Activated CD8-positive, alpha-beta T cell treated with anti-CD3 and anti-CD28 coated beads, Interleukin-2, amount 10 ng/mL, durations not matched to agents 7 days and 5 days (primary cell): ENCODE measurements at regions of chr1 and their contacts with region 1.

Region 1: DNA sequence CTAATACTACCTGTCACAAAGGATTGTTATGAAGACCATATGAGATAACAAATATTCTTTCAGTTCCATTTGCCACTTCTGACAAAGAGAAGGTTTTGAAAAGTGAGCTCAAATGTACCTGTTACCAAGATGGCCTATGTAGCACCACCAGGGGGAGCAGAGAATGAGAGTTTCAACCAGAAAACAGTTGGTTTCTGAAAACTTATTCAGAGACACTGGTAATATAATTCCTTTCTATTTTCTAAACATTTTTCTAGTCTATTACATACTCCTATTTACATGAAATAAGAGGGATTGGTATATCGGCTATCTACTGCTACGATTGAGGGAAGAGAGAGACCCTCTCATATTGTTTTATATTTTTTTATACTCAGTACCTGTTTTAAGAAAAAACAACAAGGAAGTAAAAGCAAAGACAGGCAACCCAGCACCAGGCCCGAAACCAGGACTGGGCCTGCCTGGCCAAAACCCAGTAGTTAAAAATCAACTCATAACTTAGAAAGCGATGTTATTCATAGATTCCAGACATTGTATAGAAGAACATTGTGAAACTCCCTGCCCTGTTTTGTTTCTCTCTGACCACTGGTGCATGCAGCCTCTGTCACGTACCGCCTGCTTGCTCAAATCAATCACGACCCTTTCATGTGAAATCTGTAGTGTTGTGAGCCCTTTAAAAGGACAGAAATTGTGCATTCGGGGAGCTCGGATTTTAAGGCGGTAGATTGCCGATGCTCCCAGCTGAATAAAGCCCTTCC is 48.3 kb downstream of the IL23R start:
- DNase-seq: peak; percentile 78
- ATAC-seq: peak; percentile 27
- H3K4me3 Mint-ChIP-seq: no peak overlapping the region
- H3K27ac Mint-ChIP-seq: no peak overlapping the region
- H3K4me1 Mint-ChIP-seq: peaks cover 44% of the 10 kb centered on the region
- H3K27me3 Mint-ChIP-seq: no peaks in the 10 kb centered on the region

Region 2: GRCh38 chr1:66996018-66996682 is 218.4 kb before region 1 on chr1:
- CTCF ChIA-PET with region 1: interaction called, 88 read pairs
- POLR2A ChIA-PET with region 1: no interaction called
- DNase-seq: peak; percentile 78
- ATAC-seq: peak; percentile 72
- H3K4me3 Mint-ChIP-seq: no peak overlapping the region
- H3K27ac Mint-ChIP-seq: no peak overlapping the region
- H3K4me1 Mint-ChIP-seq: peaks cover 20% of the 10 kb centered on the region
- H3K27me3 Mint-ChIP-seq: no peaks in the 10 kb centered on the region

Region 3: GRCh38 chr1:67142931-67143330 is 71.7 kb before region 1 on chr1:
- CTCF ChIA-PET with region 1: interaction called, 313 read pairs
- POLR2A ChIA-PET with region 1: interaction called, 4 read pairs
- DNase-seq: no peak
- ATAC-seq: peak; percentile 77
- H3K4me3 Mint-ChIP-seq: peak overlapping the region; percentile 9
- H3K27ac Mint-ChIP-seq: peak overlapping the region; percentile 71
- H3K4me1 Mint-ChIP-seq: peaks cover 39% of the 10 kb centered on the region
- H3K27me3 Mint-ChIP-seq: no peaks in the 10 kb centered on the region

Region 4: GRCh38 chr1:67194209-67194863 is 20.3 kb before region 1 on chr1:
- CTCF ChIA-PET with region 1: interaction called, 57 read pairs
- POLR2A ChIA-PET with region 1: no interaction called
- DNase-seq: no peak
- ATAC-seq: peak; percentile 62
- H3K4me3 Mint-ChIP-seq: peak overlapping the region; percentile 2
- H3K27ac Mint-ChIP-seq: peak overlapping the region; percentile 44
- H3K4me1 Mint-ChIP-seq: peaks cover 14% of the 10 kb centered on the region
- H3K27me3 Mint-ChIP-seq: no peaks in the 10 kb centered on the region

Region 5: GRCh38 chr1:67239738-67240137 is 25.1 kb after region 1 on chr1:
- CTCF ChIA-PET with region 1: interaction called, 52 read pairs
- POLR2A ChIA-PET with region 1: no interaction called
- DNase-seq: no peak
- ATAC-seq: no peak
- H3K4me3 Mint-ChIP-seq: no peak overlapping the region
- H3K27ac Mint-ChIP-seq: no peak overlapping the region
- H3K4me1 Mint-ChIP-seq: peaks cover 17% of the 10 kb centered on the region
- H3K27me3 Mint-ChIP-seq: peaks cover 3% of the 10 kb centered on the region

Region 6: DNA sequence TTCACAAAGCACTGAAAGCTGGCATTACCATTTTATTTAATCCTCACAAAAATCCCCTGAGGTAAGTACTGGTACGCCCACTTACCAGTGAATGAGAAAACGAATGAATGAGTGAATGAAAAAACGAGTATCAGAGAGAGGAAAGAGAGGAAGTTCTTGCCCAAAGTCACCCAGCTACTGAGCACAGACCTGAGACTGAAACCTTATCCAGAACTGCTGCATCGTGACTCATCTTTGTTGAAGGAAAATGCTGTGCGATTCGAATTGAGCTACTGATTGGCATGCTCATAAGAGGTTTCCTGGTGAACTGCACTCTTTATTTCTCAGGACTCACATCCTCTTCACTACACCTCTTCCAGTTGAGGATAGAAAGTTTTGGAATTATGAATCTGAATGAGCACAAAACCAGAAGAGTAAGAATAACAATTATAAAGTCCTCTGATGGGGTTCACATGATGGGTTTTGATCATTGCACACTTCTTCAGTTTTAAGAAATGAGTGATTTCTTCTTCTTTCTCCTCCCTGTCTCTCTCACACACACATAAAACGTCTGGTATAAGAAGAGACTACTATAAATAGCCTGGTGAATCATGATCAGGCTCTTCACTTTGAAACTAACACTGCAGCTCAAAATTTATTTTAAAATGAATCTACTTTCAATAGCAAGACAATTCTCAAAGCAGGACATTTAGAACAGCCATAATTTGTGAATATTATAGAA is 125.2 kb after region 1 on chr1:
- CTCF ChIA-PET with region 1: interaction called, 26 read pairs
- POLR2A ChIA-PET with region 1: no interaction called
- DNase-seq: peak; percentile 50
- ATAC-seq: peak; percentile 43
- H3K4me3 Mint-ChIP-seq: peak overlapping the region; percentile 1
- H3K27ac Mint-ChIP-seq: peak overlapping the region; percentile 69
- H3K4me1 Mint-ChIP-seq: peaks cover 82% of the 10 kb centered on the region
- H3K27me3 Mint-ChIP-seq: no peaks in the 10 kb centered on the region

Region 7: GRCh38 chr1:67441183-67441582 is 226.6 kb after region 1 on chr1:
- CTCF ChIA-PET with region 1: interaction called, 16 read pairs
- POLR2A ChIA-PET with region 1: no interaction called
- DNase-seq: no peak
- ATAC-seq: no peak
- H3K4me3 Mint-ChIP-seq: no peak overlapping the region
- H3K27ac Mint-ChIP-seq: no peak overlapping the region
- H3K4me1 Mint-ChIP-seq: peaks cover 5% of the 10 kb centered on the region
- H3K27me3 Mint-ChIP-seq: no peaks in the 10 kb centered on the region

Region 8: DNA sequence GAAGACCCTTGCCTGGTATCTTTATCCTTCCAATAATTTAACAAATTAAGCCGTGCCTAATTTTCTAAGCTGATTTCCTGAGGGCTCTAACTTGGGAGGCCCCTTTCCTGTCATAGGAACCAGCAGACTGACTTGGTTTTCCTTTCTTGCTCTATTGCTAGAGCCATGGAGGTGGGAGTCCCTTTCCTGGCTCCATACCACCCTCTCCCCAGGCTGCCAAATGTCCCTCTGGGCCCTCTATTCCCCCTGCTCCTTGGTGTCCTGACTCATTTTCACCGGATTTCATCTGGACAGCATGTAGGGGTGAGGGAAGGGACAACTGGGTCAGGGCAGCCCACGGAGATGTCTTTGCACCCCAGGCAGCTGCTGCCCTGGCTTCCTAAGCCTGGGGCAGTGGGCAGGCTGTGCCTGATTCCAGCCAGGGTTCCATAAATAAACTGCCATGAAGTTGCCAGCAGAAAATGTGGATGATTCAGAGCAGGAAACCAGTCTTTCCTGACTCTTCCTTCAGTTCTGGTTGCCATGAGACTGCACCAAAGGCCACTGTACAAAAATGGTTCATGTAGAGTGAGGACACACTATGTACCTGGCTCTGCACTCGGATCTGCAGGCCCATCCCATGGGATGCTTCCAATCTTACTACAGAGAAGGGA is 253.6 kb after region 1 on chr1:
- CTCF ChIA-PET with region 1: no interaction called
- POLR2A ChIA-PET with region 1: no interaction called
- DNase-seq: no peak
- ATAC-seq: no peak
- H3K4me3 Mint-ChIP-seq: no peak overlapping the region
- H3K27ac Mint-ChIP-seq: no peak overlapping the region
- H3K4me1 Mint-ChIP-seq: no peaks in the 10 kb centered on the region
- H3K27me3 Mint-ChIP-seq: peaks cover 8% of the 10 kb centered on the region

Region 9: DNA sequence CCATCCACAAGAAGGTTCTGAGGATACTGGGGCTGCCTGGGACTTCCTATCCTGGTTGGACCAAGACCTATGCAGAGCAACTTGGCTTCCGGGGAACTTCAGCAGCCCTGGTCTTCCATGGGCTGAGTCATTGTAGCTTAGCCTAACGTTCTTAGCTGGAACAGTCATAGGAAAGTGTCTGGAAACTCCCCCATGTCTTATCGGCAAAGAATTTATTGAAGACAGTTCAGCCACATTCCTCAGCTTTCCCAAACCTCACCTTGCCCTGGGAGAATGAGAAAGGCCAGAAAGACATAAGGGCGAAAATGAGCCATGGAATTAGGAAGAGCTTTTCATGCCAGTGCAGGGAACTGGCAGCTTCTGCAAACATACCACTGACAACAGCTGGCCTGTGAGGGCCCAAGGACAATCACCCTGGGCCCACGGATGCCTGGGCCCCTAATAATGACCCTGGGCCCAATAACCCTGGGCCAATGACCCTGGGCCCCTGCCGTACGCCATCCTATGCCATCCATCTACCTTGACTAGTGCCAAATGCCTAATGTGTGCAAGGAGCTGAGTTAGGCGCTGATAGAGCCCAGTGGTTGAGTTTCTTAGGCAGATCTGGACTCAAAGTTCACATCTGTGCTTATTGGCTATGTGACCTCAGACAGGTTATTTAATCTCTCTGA is 356.0 kb after region 1 on chr1:
- CTCF ChIA-PET with region 1: no interaction called
- POLR2A ChIA-PET with region 1: no interaction called
- DNase-seq: no peak
- ATAC-seq: no peak
- H3K4me3 Mint-ChIP-seq: no peak overlapping the region
- H3K27ac Mint-ChIP-seq: no peak overlapping the region
- H3K4me1 Mint-ChIP-seq: no peaks in the 10 kb centered on the region
- H3K27me3 Mint-ChIP-seq: peaks cover 3% of the 10 kb centered on the region